Activated CD8-positive, alpha-beta T cell treated with anti-CD3 and anti-CD28 coated beads for 36 hours (primary cell): ENCODE measurements at regions of chr14 and their contacts with region 1.

Region 1: DNA sequence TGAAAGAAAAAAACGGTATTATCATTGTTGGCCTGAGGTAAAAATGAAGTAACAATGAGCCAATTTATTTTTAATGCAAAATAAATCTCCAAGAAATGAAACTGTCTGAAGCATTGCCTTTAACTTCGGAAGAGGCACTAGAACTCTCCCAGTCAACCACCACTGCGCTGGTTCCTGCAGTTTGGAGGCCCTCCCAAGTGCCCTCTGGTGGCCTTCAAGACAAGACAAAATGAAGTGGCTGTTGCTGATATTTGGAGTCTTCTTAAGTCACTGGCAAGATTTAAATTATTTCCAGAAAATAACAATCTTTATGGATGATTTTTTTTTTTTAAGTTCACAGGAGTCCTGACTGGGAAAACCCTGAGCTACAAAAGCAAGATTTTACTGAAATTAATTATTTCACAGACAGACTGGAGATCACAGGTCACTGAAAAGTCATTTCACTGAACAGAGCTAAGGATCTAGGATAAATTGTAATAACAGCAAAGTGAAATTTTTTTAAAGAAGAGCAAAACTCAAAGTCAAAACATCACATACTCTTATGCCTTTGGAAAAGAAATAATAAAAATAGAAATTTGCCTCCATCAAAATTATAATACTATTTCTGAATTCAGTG is 58.2 kb downstream of the DICER1 start:
- DNase-seq: peak; percentile 53
- ATAC-seq: peak; percentile 61
- H3K4me3 Mint-ChIP-seq: no peak overlapping the region
- H3K27ac Mint-ChIP-seq: no peak overlapping the region
- H3K4me1 Mint-ChIP-seq: peaks cover 15% of the 10 kb centered on the region
- H3K27me3 Mint-ChIP-seq: no peaks in the 10 kb centered on the region
- CTCF ChIP-seq: peak; percentile 69

Region 2: DNA sequence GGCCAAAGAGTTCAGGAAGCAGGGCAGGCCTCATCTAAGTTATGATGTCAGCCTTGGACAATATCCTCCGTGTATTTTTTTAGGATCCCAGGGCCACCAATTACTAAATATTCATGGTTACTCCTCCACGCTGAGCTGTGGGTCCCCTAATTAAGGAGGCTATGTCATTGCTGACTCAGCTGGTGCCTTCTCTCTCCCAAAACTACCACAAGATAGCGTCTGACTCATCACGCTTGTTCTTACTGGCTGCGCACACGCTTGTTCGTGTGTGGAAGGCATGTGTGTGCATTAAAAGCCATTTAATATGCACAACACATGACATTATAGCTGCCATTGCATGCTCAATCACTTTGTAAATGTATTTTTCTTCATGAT is 407.4 kb before region 1 on chr14:
- CTCF ChIA-PET with region 1: interaction called, 5 read pairs
- POLR2A ChIA-PET with region 1: no interaction called
- intact Hi-C with region 1: loop called (anchors 10 kb)
- DNase-seq: no peak
- ATAC-seq: no peak
- H3K4me3 Mint-ChIP-seq: no peak overlapping the region
- H3K27ac Mint-ChIP-seq: no peak overlapping the region
- H3K4me1 Mint-ChIP-seq: no peaks in the 10 kb centered on the region
- H3K27me3 Mint-ChIP-seq: peaks cover 21% of the 10 kb centered on the region
- CTCF ChIP-seq: no peak

Region 3: DNA sequence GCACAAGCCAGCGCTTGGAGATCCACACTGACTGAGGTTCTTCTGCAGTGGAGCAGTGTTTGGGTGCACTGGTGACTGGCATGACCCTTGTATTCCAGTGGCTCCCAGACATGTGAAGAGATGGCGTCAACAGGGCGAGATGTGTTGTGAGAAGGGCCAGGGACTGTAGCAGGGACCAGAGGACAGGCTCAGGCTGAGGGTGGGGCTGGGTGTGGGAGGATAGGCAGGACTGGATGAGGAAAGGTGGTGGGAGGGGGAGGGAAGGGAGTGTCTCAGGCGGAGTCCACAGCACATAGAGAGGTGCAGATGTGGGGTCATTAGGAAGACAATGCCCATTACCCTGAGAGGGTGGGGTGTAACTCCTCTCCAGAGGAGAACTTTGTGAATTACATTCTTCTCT is 20.3 kb before region 1 on chr14:
- CTCF ChIA-PET with region 1: no interaction called
- POLR2A ChIA-PET with region 1: no interaction called
- intact Hi-C with region 1: no loop called
- DNase-seq: no peak
- ATAC-seq: no peak
- H3K4me3 Mint-ChIP-seq: no peak overlapping the region
- H3K27ac Mint-ChIP-seq: no peak overlapping the region
- H3K4me1 Mint-ChIP-seq: no peaks in the 10 kb centered on the region
- H3K27me3 Mint-ChIP-seq: no peaks in the 10 kb centered on the region
- CTCF ChIP-seq: no peak

Region 4: GRCh38 chr14:95117937-95118721 is 19.0 kb after region 1 on chr14:
- CTCF ChIA-PET with region 1: interaction called, 13 read pairs
- POLR2A ChIA-PET with region 1: no interaction called
- intact Hi-C with region 1: no loop called
- DNase-seq: no peak
- ATAC-seq: no peak
- H3K4me3 Mint-ChIP-seq: no peak overlapping the region
- H3K27ac Mint-ChIP-seq: peak overlapping the region; percentile 8
- H3K4me1 Mint-ChIP-seq: peaks cover 2% of the 10 kb centered on the region
- H3K27me3 Mint-ChIP-seq: no peaks in the 10 kb centered on the region
- CTCF ChIP-seq: no peak

Region 5: DNA sequence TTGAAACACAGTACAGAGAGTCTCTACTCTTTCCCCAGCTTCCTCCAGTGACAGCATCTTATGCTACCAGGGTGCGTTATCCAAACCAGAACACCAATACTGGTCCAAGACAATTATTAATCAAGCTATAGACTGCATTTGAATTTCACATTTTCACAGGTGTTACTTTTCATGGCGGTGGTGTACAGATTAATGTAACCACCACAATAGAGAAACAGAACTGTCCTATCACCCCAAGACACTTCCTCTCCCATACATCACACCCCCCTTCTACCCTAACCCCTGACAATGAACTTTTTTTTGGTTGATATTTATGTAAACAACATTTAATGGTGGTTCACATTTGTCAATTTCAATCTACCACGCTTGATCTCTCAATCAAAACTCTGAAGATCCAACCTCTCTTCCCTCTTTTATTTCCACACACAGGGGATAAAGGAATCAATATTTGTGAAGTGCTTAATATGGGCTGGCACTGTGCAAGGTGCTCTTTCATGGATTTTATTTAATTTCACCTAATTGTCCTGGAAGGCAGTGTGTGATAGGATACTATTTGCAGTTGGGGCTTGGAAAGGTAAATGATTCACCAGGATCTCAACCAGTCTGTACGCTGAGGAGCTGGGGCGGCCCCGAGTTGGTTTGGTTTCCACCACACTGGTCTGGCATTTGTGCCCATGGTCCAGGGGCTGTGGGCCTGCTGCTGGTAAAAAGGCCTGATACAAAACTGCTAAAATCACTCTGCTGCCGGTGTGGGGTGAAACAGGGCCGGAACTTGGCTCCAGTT is 112.8 kb after region 1 on chr14:
- CTCF ChIA-PET with region 1: no interaction called
- POLR2A ChIA-PET with region 1: no interaction called
- intact Hi-C with region 1: no loop called
- DNase-seq: no peak
- ATAC-seq: no peak
- H3K4me3 Mint-ChIP-seq: no peak overlapping the region
- H3K27ac Mint-ChIP-seq: no peak overlapping the region
- H3K4me1 Mint-ChIP-seq: no peaks in the 10 kb centered on the region
- H3K27me3 Mint-ChIP-seq: peaks cover 3% of the 10 kb centered on the region
- CTCF ChIP-seq: no peak